Aorta (tissue), 5 donors: ENCODE measurements at regions of chr3 and their contacts with region 1.

Region 1: GRCh38 chr3:197002701-197003454 is 26.7 kb downstream of the MELTF start:
- DNase-seq: peak; percentile 79 to 92
- ATAC-seq: peak; percentile 86
- H3K4me3 ChIP-seq: peak overlapping the region; percentile 51 to 84
- H3K27ac ChIP-seq: peak overlapping the region; percentile 31 to 35
- H3K4me1 ChIP-seq: no peaks in the 10 kb centered on the region
- H3K27me3 ChIP-seq: no peaks in the 10 kb centered on the region

Region 2: GRCh38 chr3:196889844-196890708 is 112.8 kb before region 1 on chr3:
- intact Hi-C with region 1: no loop called
- DNase-seq: no peak
- ATAC-seq: no peak
- H3K4me3 ChIP-seq: no peak overlapping the region
- H3K27ac ChIP-seq: no peak overlapping the region
- H3K4me1 ChIP-seq: peaks cover 0 to 3% of the 10 kb centered on the region in 2 donors
- H3K27me3 ChIP-seq: no peaks in the 10 kb centered on the region

Region 3: DNA sequence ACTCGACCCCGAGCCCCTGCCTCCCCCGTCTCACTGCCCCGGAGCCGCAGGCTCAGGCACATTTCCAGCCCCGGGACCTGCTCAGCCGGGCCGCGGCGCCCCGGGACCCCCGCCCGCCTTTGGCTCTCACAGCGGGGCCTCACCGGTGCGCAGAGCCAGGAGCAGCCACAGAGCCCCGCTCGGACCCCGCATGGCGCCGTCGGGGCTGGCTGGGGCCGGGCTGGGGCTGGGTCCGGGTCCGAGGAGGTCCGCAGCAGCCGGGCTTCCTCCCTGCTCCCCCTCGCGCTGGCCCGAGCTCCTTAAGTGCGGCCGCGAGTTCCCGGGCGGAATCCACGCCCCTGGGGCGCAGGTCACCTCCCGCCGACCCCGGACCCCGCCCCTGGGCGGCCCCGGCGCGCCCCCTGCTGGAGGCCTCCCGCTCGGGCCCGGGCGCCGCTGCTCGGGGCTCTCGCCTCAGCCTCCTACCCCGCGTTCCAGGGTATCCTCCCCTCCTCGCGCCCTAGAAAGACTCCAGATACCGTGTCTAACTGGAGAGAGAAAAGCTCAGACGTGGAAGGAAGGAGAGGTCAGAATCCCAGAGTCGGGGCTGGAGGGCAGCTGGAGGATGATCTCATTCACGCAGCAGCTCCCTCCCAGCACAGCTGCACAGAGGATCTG is 26.8 kb after region 1 on chr3 and contains the start of gene MELTF:
- intact Hi-C with region 1: loop called in 1 of 2 experiments (anchors 2 kb)
- DNase-seq: peak; percentile 72 to 89
- ATAC-seq: peak; percentile 79
- H3K4me3 ChIP-seq: peak within 1 kb of the TSS in 1 of 2 donors; percentile 23
- H3K27ac ChIP-seq: no peak within 1 kb of the TSS
- H3K4me1 ChIP-seq: no peaks in the 10 kb centered on the region
- H3K27me3 ChIP-seq: no peaks in the 10 kb centered on the region
- total RNA-seq, gene MELTF: 4.3 to 6.0 TPM

Region 4: GRCh38 chr3:197186887-197187588 is 184.2 kb after region 1 on chr3:
- intact Hi-C with region 1: loop called (anchors 2 to 10 kb)
- DNase-seq: no peak
- ATAC-seq: no peak
- H3K4me3 ChIP-seq: no peak overlapping the region
- H3K27ac ChIP-seq: no peak overlapping the region
- H3K4me1 ChIP-seq: no peaks in the 10 kb centered on the region
- H3K27me3 ChIP-seq: no peaks in the 10 kb centered on the region